GM13977 (cell line): ENCODE measurements at regions of chr1 and their contacts with region 1.

Region 1: DNA sequence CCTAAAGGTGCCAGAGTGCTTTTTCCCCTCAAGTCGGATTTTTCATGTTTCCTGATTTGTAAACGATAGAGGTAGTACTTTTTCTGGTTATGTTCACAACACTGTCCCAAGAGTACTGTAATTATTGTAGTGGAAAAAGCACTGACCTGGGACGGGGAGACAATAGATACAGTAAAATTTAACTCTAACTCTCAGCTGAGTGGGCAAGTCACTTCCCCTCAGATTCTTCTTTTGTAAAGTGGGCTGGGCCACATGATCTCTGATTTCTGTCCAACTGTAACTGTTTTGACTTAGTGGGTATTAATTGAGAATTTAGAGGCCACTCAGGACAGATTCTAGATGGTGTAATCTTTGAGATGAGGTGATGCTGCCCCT is 19.1 kb downstream of the MARCKSL1 start:
- DNase-seq: no peak
- CTCF ChIP-seq: no peak

Region 2: DNA sequence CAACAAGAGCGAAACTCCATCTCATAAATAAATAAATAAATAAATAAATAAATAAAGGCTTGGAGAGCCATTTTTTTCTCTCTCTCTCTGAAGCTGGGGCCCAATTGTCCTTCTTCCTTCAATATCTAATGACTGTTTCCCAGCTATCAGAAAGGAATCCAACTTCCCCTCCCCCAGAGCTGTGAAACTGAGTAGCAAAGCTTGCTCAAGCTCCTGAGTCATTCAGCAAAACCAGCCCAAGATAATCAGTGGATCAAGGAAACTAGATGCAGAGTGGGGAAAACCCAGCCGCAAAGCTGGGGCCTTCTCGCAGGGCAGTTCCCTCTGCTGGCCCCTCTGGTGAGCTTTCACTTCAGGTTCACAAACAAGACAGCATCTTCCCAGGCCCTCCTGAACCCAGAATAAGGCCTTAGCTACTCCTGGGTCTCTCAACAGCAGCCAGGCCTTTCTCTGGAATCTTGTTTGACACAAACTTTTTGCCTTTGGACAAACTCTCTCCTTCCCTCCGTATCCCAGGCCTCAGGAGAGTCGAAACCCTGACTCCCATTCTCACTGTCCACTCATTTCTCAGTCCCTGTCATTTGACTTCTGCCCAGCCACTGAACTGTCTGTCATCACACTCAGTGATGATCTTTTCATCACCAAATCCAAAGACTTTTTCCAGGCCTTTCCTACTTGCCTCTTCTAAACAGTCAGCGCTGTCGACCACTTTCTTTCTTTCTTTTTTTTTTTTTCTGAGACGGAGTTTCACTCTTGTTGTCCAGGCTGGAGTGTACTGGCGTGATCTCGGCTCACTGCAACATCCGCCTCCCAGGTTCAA is 360.8 kb before region 1 on chr1:
- in situ Hi-C with region 1: no loop called
- DNase-seq: peak; percentile 73
- CTCF ChIP-seq: peak; percentile 32

Region 3: DNA sequence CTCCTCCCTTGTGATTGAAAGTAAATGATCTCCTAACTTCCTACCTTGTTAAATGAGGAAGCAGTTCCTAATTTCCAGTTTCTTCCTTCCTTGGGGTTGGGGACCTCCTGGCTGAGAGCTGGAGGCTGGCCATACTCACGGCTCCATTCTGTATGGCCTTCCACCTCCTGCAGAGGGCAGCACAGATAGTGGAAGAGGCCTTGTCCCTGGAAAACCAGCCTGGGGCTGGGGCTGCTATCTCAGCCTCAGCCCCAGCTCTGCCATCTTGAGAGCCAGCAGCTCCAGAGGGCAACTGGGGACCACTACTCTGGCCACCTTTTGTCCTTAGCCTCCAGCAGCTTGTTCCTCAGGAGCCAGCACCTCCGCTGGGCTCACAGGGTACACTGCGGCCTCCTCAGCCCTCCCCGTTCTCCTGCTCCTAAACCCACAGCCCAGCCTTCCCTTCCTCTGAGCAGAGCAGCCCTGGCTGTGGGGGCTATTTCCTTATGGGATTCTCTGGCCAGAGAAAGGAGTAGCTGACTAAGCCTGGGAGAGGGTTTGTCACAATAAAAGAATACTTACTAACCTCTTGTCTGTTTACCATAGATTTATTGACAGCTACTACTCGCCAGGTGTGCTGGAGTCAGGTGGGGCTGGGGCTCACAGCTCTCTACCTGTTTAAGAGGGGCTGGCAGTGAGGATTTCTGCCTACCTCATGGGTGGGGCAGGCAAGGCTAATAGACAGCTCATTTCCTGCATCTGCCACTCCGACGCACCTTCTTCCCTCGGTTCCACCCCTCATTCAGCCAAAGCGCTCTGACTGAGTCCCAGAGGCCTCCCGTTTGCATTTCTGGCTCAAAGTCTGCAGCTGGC is 101.0 kb before region 1 on chr1:
- in situ Hi-C with region 1: loop called (anchors 10 kb)
- DNase-seq: peak; percentile 61
- CTCF ChIP-seq: peak; percentile 89

Region 4: GRCh38 chr1:32372149-32372756 is 55.4 kb after region 1 on chr1:
- in situ Hi-C with region 1: loop called (anchors 10 kb)
- DNase-seq: no peak
- CTCF ChIP-seq: peak; percentile 23